ENCODE measurements at regions of chr12 and their contacts with region 1.

Region 1: DNA sequence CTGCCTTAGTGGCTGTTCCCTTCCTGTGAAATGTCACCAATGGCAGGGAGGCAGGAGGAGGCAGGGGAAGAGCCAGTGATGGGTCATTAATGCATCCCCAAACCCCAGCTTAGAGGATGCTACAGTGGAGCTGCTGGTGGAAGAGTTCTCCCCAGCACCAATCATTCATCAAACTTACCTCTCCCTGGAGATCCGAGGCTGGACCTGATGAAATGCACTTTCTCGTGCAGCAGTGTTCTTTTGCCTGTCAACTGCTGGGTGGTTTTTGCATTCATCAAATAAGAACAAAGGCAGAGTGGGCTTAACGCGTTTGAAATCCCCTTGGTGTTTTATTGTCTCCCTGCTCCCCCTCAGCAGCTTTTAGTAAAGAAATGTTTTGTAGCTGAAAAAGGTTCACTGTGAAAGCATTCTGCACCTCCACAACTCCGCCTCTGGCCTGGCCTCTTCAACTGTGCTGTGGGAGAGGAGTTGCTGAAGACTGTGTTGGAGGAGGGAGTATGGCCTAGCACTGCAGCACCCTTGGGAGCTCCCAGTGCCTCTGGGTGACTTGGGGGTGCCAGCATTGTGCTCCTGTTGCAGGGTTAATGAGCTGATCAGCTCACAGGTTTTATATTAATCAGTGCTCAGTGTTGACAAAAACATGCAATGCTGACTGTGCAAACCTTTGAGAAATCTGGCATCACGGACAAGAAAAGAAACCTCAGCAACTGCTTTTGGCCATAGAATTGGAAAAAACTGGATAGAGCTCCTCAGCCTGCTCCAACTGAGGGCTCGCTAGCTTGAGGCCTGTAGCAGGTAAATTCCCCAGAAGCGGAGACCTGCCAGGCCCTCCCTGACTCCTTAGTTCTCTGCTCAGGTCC is 14.4 kb downstream of the TSPAN9 start:
- DNase-seq: no peak
- H3K4me3 ChIP-seq: no peak overlapping the region
- H3K27ac ChIP-seq: no peak overlapping the region
- H3K4me1 ChIP-seq: peaks cover 3% of the 10 kb centered on the region
- H3K27me3 ChIP-seq: no peaks in the 10 kb centered on the region
- CTCF ChIP-seq: no peak

Region 2: DNA sequence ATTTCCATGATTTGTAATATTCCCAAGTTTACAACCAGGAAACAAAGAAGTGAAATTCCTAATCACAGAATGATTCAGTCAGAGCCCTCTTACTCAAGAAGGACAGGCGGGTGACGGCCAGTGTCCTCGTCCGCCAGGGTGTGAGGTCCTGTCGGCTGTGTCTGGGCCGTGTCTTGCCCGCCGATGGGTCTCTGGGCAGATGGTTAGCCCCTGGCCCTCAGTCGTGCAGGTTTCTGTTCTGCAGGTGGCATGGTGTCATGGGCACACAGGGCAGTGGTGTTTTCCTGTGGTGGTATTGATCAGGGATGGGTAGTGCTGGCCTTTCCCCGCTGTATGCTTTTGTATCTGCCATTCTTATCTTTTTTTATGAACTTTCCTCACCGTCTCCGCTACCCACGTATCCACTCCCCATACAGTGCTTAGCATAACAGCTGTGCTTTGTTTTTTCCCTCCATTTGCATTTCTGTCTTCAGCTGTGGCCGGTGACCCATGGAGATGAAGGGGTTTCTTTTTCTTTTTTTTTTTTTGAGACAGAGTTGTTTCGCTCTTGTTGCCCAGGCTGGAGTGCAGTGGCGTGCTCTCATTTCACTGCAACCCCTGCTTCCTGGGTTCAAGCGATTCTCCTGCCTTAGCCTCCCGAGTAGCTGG is 86.3 kb after region 1 on chr12:
- CTCF ChIA-PET with region 1: no interaction called
- dilution Hi-C with region 1: loop called (anchors 5 kb)
- in situ Hi-C with region 1: no loop called
- intact Hi-C with region 1: no loop called
- DNase-seq: no peak
- H3K4me3 ChIP-seq: no peak overlapping the region
- H3K27ac ChIP-seq: no peak overlapping the region
- H3K4me1 ChIP-seq: no peaks in the 10 kb centered on the region
- H3K27me3 ChIP-seq: no peaks in the 10 kb centered on the region
- CTCF ChIP-seq: no peak